ENCODE measurements at regions of chr7 and their contacts with region 1.

Region 1: GRCh38 chr7:27605689-27606269 is 56.9 kb downstream of the HIBADH start:
- DNase-seq: peak; percentile 36
- H3K27ac ChIP-seq: no peak overlapping the region
- CTCF ChIP-seq: peak; percentile 85

Region 2: DNA sequence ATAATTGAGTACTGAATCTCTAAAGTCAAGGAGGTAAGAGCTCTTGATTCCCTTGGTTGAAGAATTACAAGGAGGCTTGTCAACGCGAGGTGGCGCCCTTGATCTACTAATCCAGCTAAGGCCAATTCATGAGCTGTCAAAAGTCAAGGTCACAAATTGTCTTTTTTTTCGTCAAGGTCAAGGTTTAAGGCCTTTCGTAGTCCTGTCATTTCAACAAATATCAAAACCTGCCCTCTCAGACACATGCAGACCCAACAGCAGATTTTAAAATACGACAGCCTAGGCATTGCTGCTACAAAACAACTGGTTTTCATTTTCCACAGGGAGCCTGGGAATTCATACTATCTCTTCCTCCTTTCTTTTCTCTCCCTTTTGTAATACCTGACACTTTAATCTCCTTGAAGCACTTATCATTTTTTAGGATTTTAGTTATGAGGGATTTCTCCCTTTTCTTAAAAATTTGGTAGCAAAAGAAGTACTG is 409.5 kb before region 1 on chr7:
- CTCF ChIA-PET with region 1: interaction called, 10 read pairs
- POLR2A ChIA-PET with region 1: no interaction called
- DNase-seq: no peak
- H3K27ac ChIP-seq: no peak overlapping the region
- CTCF ChIP-seq: peak; percentile 85

Measured in RWPE1 (cell line).